ENCODE measurements at regions of chr14 and their contacts with region 1.

Region 1: DNA sequence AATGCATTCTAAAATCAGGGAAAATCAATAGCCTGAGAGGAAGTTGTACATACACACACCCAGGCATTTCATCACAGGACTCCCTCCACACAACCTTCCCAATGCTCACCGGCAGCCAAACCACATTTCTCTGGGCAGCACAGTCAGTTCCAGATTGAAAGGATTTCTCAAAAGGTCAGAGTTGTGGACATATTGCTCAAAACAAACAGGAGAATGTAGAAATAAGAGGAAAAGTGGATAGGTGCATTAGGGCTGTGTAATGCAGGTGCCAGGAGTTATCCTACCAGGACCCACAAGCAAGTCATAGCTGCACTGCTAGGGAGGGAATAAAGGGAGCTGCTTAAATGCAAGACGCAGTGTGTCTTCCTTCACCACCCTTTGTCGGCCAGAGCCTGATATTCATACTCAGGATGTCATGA is 62.9 kb downstream of the GCH1 start:
- DNase-seq: peak; percentile 34 to 46
- H3K4me3 ChIP-seq: no peak overlapping the region
- H3K4me3 Mint-ChIP-seq: no peak overlapping the region
- H3K27ac Mint-ChIP-seq: no peak overlapping the region
- H3K4me1 ChIP-seq: peaks cover 24% of the 10 kb centered on the region
- H3K4me1 Mint-ChIP-seq: peaks cover 12% of the 10 kb centered on the region
- H3K27me3 ChIP-seq: no peaks in the 10 kb centered on the region
- H3K27me3 Mint-ChIP-seq: no peaks in the 10 kb centered on the region
- CTCF ChIP-seq: no peak

Region 2: GRCh38 chr14:54796961-54797360 is 42.7 kb before region 1 on chr14:
- CTCF ChIA-PET with region 1: no interaction called
- POLR2A ChIA-PET with region 1: no interaction called
- intact Hi-C with region 1: no loop called
- DNase-seq: no peak
- H3K4me3 ChIP-seq: no peak overlapping the region
- H3K4me3 Mint-ChIP-seq: no peak overlapping the region
- H3K27ac Mint-ChIP-seq: no peak overlapping the region
- H3K4me1 ChIP-seq: no peaks in the 10 kb centered on the region
- H3K4me1 Mint-ChIP-seq: no peaks in the 10 kb centered on the region
- H3K27me3 ChIP-seq: no peaks in the 10 kb centered on the region
- H3K27me3 Mint-ChIP-seq: no peaks in the 10 kb centered on the region
- CTCF ChIP-seq: no peak

Region 3: GRCh38 chr14:54902521-54903420 is 63.1 kb after region 1 on chr14 and contains the start of gene GCH1:
- CTCF ChIA-PET with region 1: no interaction called
- POLR2A ChIA-PET with region 1: no interaction called
- intact Hi-C with region 1: loop called (anchors 5 kb)
- DNase-seq: peak; percentile 90 to 95
- H3K4me3 ChIP-seq: peak within 1 kb of the TSS; percentile 63
- H3K4me3 Mint-ChIP-seq: peak within 1 kb of the TSS; percentile 79
- H3K27ac Mint-ChIP-seq: peak within 1 kb of the TSS; percentile 73
- H3K4me1 ChIP-seq: peaks cover 8% of the 10 kb centered on the region; the same call in 1 of the 2 replicates
- H3K4me1 Mint-ChIP-seq: no peaks in the 10 kb centered on the region
- H3K27me3 ChIP-seq: no peaks in the 10 kb centered on the region
- H3K27me3 Mint-ChIP-seq: no peaks in the 10 kb centered on the region
- CTCF ChIP-seq: peak; percentile 63 to 70
- total RNA-seq, gene GCH1: 16.8 and 17.9 TPM in 2 replicates

Region 4: GRCh38 chr14:55031190-55031589 is 191.5 kb after region 1 on chr14:
- CTCF ChIA-PET with region 1: no interaction called
- POLR2A ChIA-PET with region 1: no interaction called
- intact Hi-C with region 1: no loop called
- DNase-seq: no peak
- H3K4me3 ChIP-seq: no peak overlapping the region
- H3K4me3 Mint-ChIP-seq: no peak overlapping the region
- H3K27ac Mint-ChIP-seq: no peak overlapping the region
- H3K4me1 ChIP-seq: peaks cover 23% of the 10 kb centered on the region
- H3K4me1 Mint-ChIP-seq: peaks cover 16% of the 10 kb centered on the region
- H3K27me3 ChIP-seq: no peaks in the 10 kb centered on the region
- H3K27me3 Mint-ChIP-seq: no peaks in the 10 kb centered on the region
- CTCF ChIP-seq: no peak

Region 5: DNA sequence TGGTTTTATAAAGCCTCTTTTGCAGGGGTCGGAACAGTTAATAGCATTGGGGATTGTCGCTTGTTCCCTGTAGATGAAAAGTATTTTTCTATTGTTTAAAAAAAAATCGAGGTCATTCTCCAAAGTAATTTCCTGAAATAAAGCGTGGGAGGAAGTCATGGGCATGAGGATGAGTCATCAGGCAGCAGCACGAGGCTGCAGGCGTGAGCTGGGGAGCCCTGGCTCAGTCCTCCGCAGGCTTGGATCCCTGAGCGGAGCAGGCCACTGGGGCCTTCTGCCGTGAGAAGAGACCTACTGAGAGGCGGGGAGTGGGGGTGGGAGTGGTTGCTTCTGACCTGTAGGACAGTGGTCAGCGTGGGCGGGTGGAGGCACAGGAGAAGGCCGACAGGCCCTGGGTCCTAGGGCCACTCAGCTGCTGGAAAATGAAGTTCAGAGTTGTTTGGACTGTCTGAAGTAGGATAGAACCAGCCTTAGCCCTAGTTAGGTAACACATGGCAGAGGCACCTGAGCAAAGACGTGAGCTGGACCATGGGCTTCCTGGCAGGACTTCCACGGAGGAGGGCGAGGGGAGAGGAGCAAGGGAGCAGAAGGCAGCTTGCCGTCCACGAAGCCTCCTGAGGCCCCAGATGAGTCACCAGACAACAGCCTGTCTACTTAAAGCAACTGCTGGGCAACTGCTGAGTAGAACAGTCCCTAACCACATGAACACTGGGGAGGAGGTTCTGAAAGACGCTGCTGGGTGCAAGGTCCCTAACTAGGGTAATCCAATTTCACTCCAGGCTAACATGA is 268.2 kb after region 1 on chr14:
- CTCF ChIA-PET with region 1: no interaction called
- POLR2A ChIA-PET with region 1: no interaction called
- intact Hi-C with region 1: no loop called
- DNase-seq: peak; percentile 36 to 82
- H3K4me3 ChIP-seq: no peak overlapping the region
- H3K4me3 Mint-ChIP-seq: no peak overlapping the region
- H3K27ac Mint-ChIP-seq: peak overlapping the region; percentile 96
- H3K4me1 ChIP-seq: peaks cover 29% of the 10 kb centered on the region
- H3K4me1 Mint-ChIP-seq: peaks cover 31% of the 10 kb centered on the region
- H3K27me3 ChIP-seq: no peaks in the 10 kb centered on the region
- H3K27me3 Mint-ChIP-seq: no peaks in the 10 kb centered on the region
- CTCF ChIP-seq: no peak

Measured in Caco-2 (cell line).